Mammary epithelial cell (primary cell): ENCODE measurements at regions of chr10 and their contacts with region 1.

Region 1: GRCh38 chr10:119750391-119751230 is 24.8 kb downstream of the INPP5F start:
- DNase-seq: peak; percentile 69
- H3K4me3 ChIP-seq: no peak overlapping the region
- H3K27ac ChIP-seq: no peak overlapping the region
- H3K4me1 ChIP-seq: no peaks in the 10 kb centered on the region
- H3K27me3 ChIP-seq: no peaks in the 10 kb centered on the region
- CTCF ChIP-seq: peak; percentile 97 to 98

Region 2: DNA sequence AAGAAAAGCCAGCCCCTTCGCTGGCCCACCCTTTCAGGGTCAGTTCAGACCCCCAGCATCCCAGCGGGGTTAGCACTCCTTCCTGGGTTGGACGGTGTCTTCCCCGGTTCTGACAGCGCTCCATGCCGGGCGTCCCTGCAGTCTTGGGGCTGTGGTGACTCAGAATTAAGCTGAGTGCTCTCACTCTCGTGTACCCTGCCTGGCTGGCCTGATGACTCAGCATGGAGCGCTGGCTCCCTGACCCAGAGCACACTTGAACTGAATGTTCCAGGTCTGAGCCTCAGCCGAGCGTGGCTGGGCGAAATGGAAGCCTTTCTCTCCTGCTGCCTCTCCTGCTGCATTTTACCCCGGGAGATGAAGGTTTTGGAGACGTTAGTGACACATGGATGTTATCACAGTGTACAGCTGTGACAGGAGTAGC is 92.3 kb before region 1 on chr10:
- CTCF ChIA-PET with region 1: no interaction called
- dilution Hi-C with region 1: loop called (anchors 5 kb)
- in situ Hi-C with region 1: no loop called
- intact Hi-C with region 1: no loop called
- DNase-seq: peak; percentile 92
- H3K4me3 ChIP-seq: peak overlapping the region in 2 of 3 experiments; percentile 20 to 23
- H3K27ac ChIP-seq: peak overlapping the region; percentile 56
- H3K4me1 ChIP-seq: peaks cover 68% of the 10 kb centered on the region
- H3K27me3 ChIP-seq: no peaks in the 10 kb centered on the region
- CTCF ChIP-seq: no peak

Region 3: DNA sequence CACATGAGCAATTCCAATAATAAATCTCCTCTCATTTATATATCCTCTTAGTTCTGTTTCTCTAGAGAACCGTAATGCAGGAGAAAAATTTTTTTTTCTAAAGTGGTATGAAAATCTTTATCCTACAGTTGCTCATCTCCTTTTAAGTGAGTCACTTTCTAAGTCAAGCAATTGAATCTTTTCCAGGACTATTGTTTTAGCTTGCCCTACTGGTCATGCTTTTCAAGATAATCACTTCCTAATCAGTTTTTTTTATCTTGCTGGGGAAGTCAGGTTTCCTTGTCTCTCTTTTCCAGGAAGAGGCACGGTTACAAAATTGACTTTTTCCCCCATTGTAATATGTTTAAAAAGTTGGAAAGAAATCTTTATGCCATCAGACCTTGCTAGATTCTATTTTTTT is 19.3 kb after region 1 on chr10:
- CTCF ChIA-PET with region 1: no interaction called
- dilution Hi-C with region 1: no loop called
- in situ Hi-C with region 1: no loop called
- intact Hi-C with region 1: no loop called
- DNase-seq: peak; percentile 81
- H3K4me3 ChIP-seq: peak overlapping the region in 1 of 3 experiments; percentile 24
- H3K27ac ChIP-seq: peak overlapping the region; percentile 62
- H3K4me1 ChIP-seq: peaks cover 32% of the 10 kb centered on the region
- H3K27me3 ChIP-seq: no peaks in the 10 kb centered on the region
- CTCF ChIP-seq: no peak

Region 4: DNA sequence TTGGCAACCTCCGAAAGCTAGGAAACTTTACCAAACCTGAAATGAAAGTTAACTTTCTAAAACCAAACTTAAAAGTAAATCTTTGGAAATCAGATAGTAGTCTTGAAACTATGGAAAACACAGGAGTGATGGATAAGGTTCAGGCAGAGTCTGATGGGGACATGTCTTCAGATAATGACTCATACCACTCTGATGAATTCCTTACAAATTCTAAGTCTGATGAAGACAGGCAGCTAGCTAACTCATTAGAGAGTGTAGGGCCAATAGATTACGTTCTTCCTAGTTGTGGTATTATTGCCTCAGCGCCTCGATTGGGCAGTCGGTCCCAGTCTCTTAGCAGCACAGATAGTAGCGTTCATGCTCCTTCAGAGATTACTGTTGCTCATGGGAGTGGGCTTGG is 76.2 kb after region 1 on chr10:
- CTCF ChIA-PET with region 1: no interaction called
- dilution Hi-C with region 1: no loop called
- in situ Hi-C with region 1: loop called in 1 of 2 experiments (anchors 10 kb)
- intact Hi-C with region 1: loop called (anchors 2 kb)
- DNase-seq: peak; percentile 14
- H3K4me3 ChIP-seq: no peak overlapping the region
- H3K27ac ChIP-seq: no peak overlapping the region
- H3K4me1 ChIP-seq: no peaks in the 10 kb centered on the region
- H3K27me3 ChIP-seq: no peaks in the 10 kb centered on the region
- CTCF ChIP-seq: no peak

Region 5: DNA sequence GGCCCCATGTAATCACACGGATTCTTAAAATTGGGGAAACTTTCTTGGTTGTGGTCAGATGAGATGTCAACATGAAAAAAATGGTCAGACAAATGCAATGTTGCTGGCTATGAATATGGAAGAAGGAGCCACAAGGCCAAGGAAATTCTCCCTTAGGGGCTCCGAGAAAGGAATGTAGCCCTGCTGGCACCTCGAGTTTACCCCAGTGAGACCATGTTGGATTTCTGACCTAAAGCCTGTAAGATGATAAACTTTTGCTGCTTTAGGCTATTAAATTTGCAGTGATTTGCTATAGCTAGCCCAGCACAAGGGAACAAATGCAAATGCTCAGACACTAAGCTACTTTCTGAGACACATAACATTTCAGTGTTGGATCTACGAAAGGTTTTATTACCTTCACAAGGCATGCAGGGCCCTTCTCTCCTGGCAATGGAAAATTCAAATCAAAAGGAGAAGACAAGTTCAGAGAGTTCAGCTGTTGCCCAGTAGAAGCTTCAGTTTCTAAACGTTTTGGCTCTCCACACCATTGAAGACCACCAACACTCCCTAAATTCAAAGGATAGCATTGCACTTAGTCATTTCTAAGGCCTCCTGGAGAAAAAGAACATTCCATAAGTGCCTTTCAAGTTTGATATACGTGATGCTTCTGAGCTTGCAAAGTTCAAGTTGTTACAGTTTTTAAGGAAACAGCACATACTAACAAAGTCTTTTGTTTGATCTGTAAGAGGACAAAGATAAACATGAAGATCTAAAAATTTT is 98.6 kb after region 1 on chr10:
- CTCF ChIA-PET with region 1: no interaction called
- dilution Hi-C with region 1: loop called (anchors 5 kb)
- in situ Hi-C with region 1: no loop called
- intact Hi-C with region 1: no loop called
- DNase-seq: no peak
- H3K4me3 ChIP-seq: no peak overlapping the region
- H3K27ac ChIP-seq: peak overlapping the region; percentile 43
- H3K4me1 ChIP-seq: peaks cover 13% of the 10 kb centered on the region
- H3K27me3 ChIP-seq: no peaks in the 10 kb centered on the region
- CTCF ChIP-seq: no peak

Region 6: DNA sequence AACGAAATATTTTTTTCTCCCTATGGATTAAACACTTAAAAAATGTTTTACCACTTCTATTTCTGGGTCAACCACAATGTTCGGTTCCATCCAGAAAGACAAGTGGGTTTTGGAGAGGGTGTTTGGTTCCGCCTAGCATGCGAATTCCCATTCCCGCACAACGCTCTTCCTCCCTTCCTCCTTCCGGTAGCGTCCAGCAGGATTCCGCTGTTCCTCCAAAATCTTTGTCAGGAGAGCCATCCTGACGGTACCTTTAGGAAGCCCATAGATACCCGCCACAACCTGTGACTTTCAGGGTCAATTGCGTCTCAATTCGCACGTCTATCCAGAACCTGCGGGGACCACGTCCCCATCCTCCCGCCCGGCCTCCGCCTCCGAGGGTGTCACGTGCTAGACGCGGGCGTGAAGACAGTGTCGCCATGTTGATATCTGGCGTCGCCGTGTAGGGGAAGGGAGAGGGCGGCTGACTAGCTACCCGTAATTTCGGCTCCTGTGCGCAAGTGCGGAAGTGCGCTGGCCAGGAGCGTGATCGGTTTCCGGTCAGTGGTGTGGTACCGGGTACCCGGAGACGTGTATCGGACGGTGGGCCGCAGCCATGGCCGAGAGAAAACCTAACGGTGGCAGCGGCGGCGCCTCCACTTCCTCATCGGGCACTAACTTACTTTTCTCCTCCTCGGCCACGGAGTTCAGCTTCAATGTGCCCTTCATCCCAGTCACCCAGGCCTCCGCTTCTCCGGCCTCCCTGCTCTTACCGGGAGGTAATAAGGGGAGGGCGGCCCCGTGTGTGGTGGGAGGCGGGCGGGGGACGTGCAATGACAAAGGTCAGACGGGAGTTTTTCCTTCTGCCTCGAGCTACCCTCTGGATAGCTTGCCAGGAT is 141.8 kb after region 1 on chr10 and contains the start of gene SEC23IP:
- CTCF ChIA-PET with region 1: no interaction called
- dilution Hi-C with region 1: no loop called
- in situ Hi-C with region 1: no loop called
- intact Hi-C with region 1: loop called (anchors 1 kb)
- DNase-seq: peak; percentile 93
- H3K4me3 ChIP-seq: peak within 1 kb of the TSS; percentile 84 to 93 (median 85)
- H3K27ac ChIP-seq: peak within 1 kb of the TSS; percentile 66
- H3K4me1 ChIP-seq: peaks cover 34% of the 10 kb centered on the region
- H3K27me3 ChIP-seq: no peaks in the 10 kb centered on the region
- CTCF ChIP-seq: no peak
- total RNA-seq, gene SEC23IP: 29.7 to 66.9 TPM

Region 7: DNA sequence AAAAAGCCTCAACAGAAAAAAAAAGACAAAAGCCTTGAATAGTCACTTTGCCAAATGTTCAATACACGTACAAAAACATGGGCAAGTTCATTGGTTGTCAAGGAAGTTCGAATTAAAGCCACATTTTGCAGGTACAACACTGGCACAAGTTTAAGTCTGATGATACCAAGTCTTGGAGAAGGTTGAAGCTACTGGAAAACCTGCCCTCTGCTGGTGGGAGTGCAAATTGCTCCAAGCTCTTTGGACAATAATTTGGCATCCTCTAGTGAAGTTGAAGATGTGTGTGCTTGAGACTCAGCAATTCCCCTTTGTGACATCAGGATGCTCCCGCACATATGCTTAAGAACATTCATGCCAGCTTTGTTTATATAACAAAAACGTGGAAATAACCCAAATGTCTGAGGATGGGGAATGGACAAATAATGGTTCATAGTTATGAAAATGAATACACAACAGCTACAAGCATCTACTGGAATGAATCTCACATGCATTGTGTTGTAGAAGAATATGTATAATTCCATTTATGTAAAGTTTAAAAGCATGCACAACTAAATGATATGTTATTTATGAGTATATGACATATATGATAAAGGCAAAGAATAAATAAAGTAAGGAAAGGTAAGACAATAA is 586.4 kb after region 1 on chr10:
- CTCF ChIA-PET with region 1: interaction called, 6 read pairs
- dilution Hi-C with region 1: no loop called
- in situ Hi-C with region 1: no loop called
- intact Hi-C with region 1: loop called (anchors 1 kb)
- DNase-seq: peak; percentile 45
- H3K4me3 ChIP-seq: no peak overlapping the region
- H3K27ac ChIP-seq: no peak overlapping the region
- H3K4me1 ChIP-seq: no peaks in the 10 kb centered on the region
- H3K27me3 ChIP-seq: peaks cover 10% of the 10 kb centered on the region
- CTCF ChIP-seq: peak; percentile 89 to 92